ENCODE measurements at regions of chr3 and their contacts with region 1.

Region 1: GRCh38 chr3:171459942-171460724 is at the start of gene TNIK:
- DNase-seq: peak; percentile 91
- H3K4me3 ChIP-seq: peak within 1 kb of the TSS; percentile 74 to 91 (median 89)
- H3K27ac ChIP-seq: peak within 1 kb of the TSS; percentile 38
- H3K4me1 ChIP-seq: peaks cover 25% of the 10 kb centered on the region
- H3K27me3 ChIP-seq: no peaks in the 10 kb centered on the region
- CTCF ChIP-seq: peak; percentile 6 to 28
- POLR2A ChIP-seq: peak; percentile 59
- total RNA-seq, gene TNIK: 29.6 and 39.7 TPM in 2 replicates

Region 2: DNA sequence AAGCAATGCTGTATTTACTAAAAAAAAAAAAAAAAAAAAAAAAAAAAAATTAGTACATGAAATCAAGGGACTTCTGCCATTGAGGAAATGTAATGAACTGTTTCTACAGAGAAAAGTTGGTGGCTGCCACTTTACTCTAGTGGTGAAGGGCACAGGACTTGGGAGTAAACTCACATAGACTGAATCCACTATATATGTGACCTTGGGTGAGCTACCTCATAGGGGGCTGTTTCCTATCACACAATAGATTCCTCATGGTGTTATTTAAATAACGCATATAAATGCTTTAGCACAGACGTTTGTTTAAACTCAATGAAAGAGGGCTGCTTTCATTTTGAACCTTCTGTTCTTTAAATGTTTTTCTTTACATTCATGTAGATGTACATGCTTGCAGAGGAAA is 1721.1 kb before region 1 on chr3:
- CTCF ChIA-PET with region 1: no interaction called
- POLR2A ChIA-PET with region 1: no interaction called
- dilution Hi-C with region 1: no loop called
- intact Hi-C with region 1: no loop called
- DNase-seq: no peak
- H3K4me3 ChIP-seq: no peak overlapping the region
- H3K27ac ChIP-seq: no peak overlapping the region
- H3K4me1 ChIP-seq: no peaks in the 10 kb centered on the region
- H3K27me3 ChIP-seq: peaks cover 0 to 2% of the 10 kb centered on the region in 2 experiments
- CTCF ChIP-seq: no peak
- POLR2A ChIP-seq: no peak

Region 3: DNA sequence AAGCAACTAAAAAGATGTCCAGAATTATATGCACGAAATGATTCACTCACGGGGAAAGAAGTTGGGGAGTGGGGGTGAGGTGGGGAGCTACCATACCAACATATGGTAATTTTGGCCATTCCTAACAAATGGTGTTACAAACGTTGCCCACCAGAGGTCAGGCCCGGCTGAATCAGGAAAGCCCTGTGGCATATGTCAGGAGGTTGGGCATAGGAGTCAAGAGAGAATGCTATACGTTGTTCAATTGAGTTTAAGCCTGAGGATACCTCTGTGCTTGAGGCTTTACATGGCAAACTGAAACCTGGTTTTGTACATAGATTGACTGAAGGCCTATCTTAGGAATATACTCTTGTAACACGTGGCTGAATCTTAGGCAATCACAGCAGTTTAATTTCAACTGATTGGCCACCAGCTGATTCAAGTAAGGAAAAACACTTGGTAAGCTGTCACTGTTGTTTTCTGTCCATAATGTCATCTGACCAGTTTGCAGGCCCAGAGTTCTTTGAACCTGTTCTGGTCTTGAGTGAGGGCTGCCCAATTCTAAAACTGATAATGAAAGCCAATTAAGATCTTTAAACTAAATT is 410.2 kb before region 1 on chr3:
- CTCF ChIA-PET with region 1: interaction called, 4 read pairs
- POLR2A ChIA-PET with region 1: no interaction called
- dilution Hi-C with region 1: no loop called
- intact Hi-C with region 1: loop called (anchors 2 kb)
- DNase-seq: peak; percentile 67
- H3K4me3 ChIP-seq: no peak overlapping the region
- H3K27ac ChIP-seq: no peak overlapping the region
- H3K4me1 ChIP-seq: no peaks in the 10 kb centered on the region
- H3K27me3 ChIP-seq: no peaks in the 10 kb centered on the region
- CTCF ChIP-seq: peak; percentile 58 to 63
- POLR2A ChIP-seq: no peak

Region 4: DNA sequence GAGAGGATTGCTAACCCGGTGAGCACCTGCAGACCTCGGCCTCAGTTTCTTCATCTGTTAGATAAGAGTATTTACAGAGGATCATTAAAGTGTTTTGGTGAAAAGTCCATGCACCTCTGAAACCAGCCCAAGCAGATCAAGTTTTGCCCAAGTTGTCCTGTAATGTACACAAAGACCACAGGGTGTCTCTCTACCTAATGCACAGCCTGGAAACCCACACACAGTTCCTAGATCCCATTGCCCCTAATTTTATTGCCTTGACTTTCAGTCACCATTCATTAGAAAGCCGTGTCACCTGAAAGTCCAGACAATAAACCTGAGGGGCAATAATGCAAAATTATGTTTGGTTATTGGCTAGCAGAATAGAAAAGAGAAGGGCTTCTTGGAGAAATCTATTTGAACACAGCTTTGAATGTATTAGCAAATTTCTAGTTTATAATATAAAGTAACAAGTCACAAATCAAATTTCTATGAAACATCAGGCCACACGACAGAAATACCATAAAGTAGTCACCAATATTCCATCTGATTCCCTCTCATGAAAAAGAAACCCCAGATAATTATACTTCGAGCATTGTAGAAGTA is 272.3 kb before region 1 on chr3:
- CTCF ChIA-PET with region 1: interaction called, 27 read pairs
- POLR2A ChIA-PET with region 1: no interaction called
- dilution Hi-C with region 1: no loop called
- intact Hi-C with region 1: loop called (anchors 1 kb)
- DNase-seq: peak; percentile 67
- H3K4me3 ChIP-seq: no peak overlapping the region
- H3K27ac ChIP-seq: no peak overlapping the region
- H3K4me1 ChIP-seq: peaks cover 43% of the 10 kb centered on the region
- H3K27me3 ChIP-seq: no peaks in the 10 kb centered on the region
- CTCF ChIP-seq: peak; percentile 61 to 69
- POLR2A ChIP-seq: no peak

Region 5: GRCh38 chr3:171284308-171285075 is 175.6 kb before region 1 on chr3:
- CTCF ChIA-PET with region 1: interaction called, 5 read pairs
- POLR2A ChIA-PET with region 1: no interaction called
- dilution Hi-C with region 1: no loop called
- intact Hi-C with region 1: loop called (anchors 1 kb)
- DNase-seq: peak; percentile 95
- H3K4me3 ChIP-seq: no peak overlapping the region
- H3K27ac ChIP-seq: peak overlapping the region; percentile 96
- H3K4me1 ChIP-seq: peaks cover 45% of the 10 kb centered on the region
- H3K27me3 ChIP-seq: no peaks in the 10 kb centered on the region
- CTCF ChIP-seq: no peak
- POLR2A ChIP-seq: no peak

Region 6: DNA sequence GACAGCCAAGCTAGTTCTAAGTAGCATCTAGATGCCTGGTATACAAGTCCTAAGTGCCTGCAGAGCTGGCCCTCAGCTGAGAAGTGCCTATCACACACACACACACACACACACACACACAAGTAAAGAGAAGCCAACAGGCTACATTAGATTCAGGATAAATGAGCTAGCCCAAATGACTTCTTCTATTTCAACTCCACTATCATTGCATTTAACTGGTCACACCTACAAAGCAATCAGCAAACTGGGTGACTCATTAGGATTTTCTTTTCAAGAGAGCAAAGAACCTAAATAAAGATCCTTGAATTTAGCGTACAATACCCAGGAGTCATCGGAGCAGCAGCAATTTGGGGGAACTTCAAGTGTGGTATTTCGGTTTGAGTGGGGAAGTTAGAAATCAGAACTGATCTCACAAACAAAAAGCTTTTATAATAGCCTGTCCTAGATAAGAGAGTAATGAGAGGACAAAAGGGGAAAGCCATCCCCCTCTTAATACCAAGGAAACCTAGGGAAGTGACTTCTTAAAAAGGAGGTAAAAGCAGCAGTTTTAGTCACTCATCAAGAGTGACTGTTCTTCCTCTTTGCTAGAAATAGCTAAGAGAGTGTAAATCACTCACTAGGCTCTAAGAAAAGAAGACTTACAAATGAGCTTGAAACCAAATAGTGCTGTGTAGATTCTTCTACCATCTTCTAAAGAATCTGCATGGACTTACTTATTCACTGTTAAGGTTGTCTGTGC is 112.7 kb before region 1 on chr3:
- CTCF ChIA-PET with region 1: interaction called, 4 read pairs
- POLR2A ChIA-PET with region 1: no interaction called
- dilution Hi-C with region 1: no loop called
- intact Hi-C with region 1: loop called (anchors 5 kb)
- DNase-seq: peak; percentile 70
- H3K4me3 ChIP-seq: no peak overlapping the region
- H3K27ac ChIP-seq: peak overlapping the region; percentile 48
- H3K4me1 ChIP-seq: peaks cover 50% of the 10 kb centered on the region
- H3K27me3 ChIP-seq: no peaks in the 10 kb centered on the region
- CTCF ChIP-seq: no peak
- POLR2A ChIP-seq: no peak

Region 7: GRCh38 chr3:171525437-171525836 is 65.3 kb after region 1 on chr3:
- CTCF ChIA-PET with region 1: interaction called, 3 read pairs
- POLR2A ChIA-PET with region 1: no interaction called
- dilution Hi-C with region 1: no loop called
- intact Hi-C with region 1: loop called (anchors 2 kb)
- DNase-seq: no peak
- H3K4me3 ChIP-seq: no peak overlapping the region
- H3K27ac ChIP-seq: no peak overlapping the region
- H3K4me1 ChIP-seq: peaks cover 20% of the 10 kb centered on the region
- H3K27me3 ChIP-seq: no peaks in the 10 kb centered on the region
- CTCF ChIP-seq: no peak
- POLR2A ChIP-seq: no peak

Region 8: DNA sequence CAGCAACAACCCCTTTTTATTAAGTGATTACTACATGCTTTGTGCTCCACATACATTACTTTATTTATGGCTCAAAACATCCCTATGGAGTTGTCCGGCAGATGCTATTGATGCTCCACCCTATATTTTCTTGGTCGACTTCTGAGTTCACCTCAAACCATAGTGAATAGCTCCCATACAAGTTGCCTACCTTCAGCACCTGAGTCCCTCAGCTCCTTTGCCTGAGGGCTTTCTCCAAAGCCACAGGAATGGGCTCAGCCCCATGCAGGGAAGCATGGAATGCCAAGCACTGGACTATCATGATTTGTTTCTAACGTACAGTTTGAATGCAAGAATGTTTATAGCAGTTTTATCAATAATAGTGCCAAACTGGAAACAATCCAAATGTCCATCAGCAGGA is 124.9 kb after region 1 on chr3:
- CTCF ChIA-PET with region 1: no interaction called
- POLR2A ChIA-PET with region 1: no interaction called
- dilution Hi-C with region 1: no loop called
- intact Hi-C with region 1: no loop called
- DNase-seq: no peak
- H3K4me3 ChIP-seq: no peak overlapping the region
- H3K27ac ChIP-seq: no peak overlapping the region
- H3K4me1 ChIP-seq: no peaks in the 10 kb centered on the region
- H3K27me3 ChIP-seq: no peaks in the 10 kb centered on the region
- CTCF ChIP-seq: no peak
- POLR2A ChIP-seq: no peak

Region 9: DNA sequence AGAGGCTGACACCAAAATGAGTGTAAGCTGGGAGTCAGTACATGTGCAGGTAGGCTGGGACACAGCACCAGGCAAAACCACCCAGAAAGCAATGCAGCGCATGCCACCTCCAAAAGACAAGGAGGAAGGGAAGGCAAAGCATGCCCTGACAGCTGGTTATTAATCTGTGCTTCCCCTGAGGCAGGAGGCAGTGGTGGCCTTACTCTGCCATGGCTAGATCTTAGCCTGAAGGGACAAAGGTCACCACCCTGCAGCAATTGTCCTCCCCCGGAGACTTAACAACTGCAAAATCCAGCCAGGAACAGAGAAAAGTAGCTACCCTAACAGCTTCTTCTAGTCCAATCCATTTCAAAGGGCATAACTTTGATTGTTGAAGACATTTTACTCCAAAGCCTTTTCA is 276.4 kb after region 1 on chr3:
- CTCF ChIA-PET with region 1: no interaction called
- POLR2A ChIA-PET with region 1: no interaction called
- dilution Hi-C with region 1: no loop called
- intact Hi-C with region 1: no loop called
- DNase-seq: no peak
- H3K4me3 ChIP-seq: no peak overlapping the region
- H3K27ac ChIP-seq: no peak overlapping the region
- H3K4me1 ChIP-seq: no peaks in the 10 kb centered on the region
- H3K27me3 ChIP-seq: no peaks in the 10 kb centered on the region
- CTCF ChIP-seq: no peak
- POLR2A ChIP-seq: no peak